Heart left ventricle (tissue), 16 donors: ENCODE measurements at regions of chr13 and their contacts with region 1.

Region 1: DNA sequence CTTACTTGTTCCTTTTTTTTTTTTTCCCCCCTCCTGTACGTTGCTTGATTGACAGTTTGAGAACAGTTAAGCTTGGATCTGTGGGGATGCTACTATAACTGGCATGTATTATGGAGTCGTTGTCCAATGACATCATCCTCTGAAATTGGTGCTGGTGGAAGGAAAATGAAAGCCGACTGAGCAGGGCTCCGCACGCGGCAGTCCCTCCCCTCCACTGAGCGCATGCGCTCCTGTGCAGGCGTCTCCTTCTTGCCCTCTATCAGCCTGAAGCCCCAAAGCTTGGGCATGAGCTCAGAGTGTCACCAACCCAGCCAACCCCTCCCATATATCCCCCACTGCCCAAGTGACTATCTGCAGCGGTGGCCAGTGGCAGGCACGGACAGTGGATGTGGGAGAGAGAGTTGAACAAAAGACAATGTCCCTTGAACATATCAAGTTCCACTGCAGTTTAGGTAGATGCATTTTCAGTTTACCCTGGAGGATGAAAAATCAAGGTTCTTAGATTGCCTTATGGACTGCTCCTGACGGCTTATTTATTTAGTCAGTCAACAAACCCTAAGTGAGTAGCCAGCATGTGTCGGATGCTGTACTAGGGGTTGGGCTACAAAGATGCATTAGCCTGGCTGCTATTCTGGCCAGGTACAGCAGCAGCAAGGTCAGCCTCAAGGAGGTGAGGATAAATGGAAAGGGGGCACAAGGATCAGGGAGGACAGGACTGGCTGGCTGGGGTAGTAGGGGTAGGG is 20.8 kb downstream of the MBNL2 start:
- DNase-seq: peak in 2 of 5 donors; percentile 39 to 42
- ATAC-seq: peak in 3 of 4 donors; percentile 19 to 57 (median 40)
- H3K4me3 ChIP-seq: no peak overlapping the region
- H3K27ac ChIP-seq: peak overlapping the region; percentile 37 to 84 (median 74)
- H3K4me1 ChIP-seq: peaks cover 12 to 100% (median 90%) of the 10 kb centered on the region in 12 donors
- H3K27me3 ChIP-seq: no peaks in the 10 kb centered on the region
- CTCF ChIP-seq: no peak
- POLR2A ChIP-seq: no peak

Region 2: DNA sequence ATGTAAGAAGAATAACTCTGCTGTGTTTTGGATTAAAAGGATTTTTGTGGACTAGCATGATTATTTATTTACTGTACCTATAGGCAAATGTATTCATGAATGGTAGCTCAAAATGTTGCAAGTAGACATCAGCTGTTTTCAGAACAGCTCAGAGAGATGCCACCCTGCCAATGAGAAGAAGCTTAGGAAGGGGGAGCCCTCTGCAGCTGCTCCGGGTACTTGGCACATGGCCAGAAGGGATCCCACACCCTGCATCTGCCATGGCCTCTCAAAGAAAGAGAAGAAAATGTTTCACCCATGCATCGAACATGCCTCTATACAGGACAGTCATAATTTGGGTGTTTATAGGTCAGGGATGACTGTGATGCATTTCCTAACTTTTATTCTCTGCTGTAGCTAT is 51.3 kb before region 1 on chr13:
- intact Hi-C with region 1: no loop called
- DNase-seq: no peak
- ATAC-seq: no peak
- H3K4me3 ChIP-seq: no peak overlapping the region
- H3K27ac ChIP-seq: no peak overlapping the region
- H3K4me1 ChIP-seq: peaks cover 0 to 7% (median 0%) of the 10 kb centered on the region in 12 donors
- H3K27me3 ChIP-seq: no peaks in the 10 kb centered on the region
- CTCF ChIP-seq: no peak
- POLR2A ChIP-seq: no peak

Region 3: GRCh38 chr13:97307882-97308624 is 65.1 kb after region 1 on chr13:
- intact Hi-C with region 1: loop called in 1 of 10 experiments (anchors 5 kb)
- DNase-seq: peak in 3 of 5 donors; percentile 49 to 52 (median 51)
- ATAC-seq: peak; percentile 48 to 65 (median 58)
- H3K4me3 ChIP-seq: no peak overlapping the region
- H3K27ac ChIP-seq: peak overlapping the region in 8 of 12 donors; percentile 28 to 58 (median 38)
- H3K4me1 ChIP-seq: peaks cover 6 to 76% (median 40%) of the 10 kb centered on the region in 12 donors
- H3K27me3 ChIP-seq: no peaks in the 10 kb centered on the region
- CTCF ChIP-seq: no peak
- POLR2A ChIP-seq: no peak

Region 4: DNA sequence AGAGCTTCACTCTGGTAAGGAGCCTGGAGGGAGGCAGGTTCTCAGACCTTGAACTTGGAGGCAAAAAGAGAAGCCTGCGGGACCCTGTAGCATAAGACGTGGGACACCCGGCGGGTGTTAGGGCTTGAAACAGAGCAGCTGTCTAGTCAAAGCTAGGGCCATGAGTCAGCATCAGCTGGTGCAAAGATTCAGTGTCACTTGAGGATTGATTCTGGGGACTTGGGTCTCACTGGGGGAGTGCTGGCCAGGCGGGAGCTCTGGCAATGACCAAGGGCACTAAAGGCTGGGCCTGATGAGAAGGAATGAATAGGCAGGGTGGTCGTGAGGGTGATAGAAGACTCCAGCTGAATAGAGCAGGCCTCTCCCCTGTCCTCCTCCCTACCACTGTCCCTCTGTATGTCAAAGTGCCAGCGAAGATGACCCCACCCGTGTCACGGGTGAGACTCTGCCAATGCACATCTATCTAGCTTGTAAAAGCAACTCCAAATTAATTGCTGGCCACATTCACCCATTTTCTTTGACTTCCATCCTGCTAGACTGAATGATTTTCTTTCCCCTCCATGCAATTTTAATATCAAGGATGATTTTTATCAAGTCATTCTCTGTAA is 76.3 kb after region 1 on chr13:
- intact Hi-C with region 1: loop called in 1 of 10 experiments (anchors 5 kb)
- DNase-seq: peak in 3 of 5 donors; percentile 29 to 69 (median 57)
- ATAC-seq: peak in 3 of 4 donors; percentile 52 to 63 (median 59)
- H3K4me3 ChIP-seq: no peak overlapping the region
- H3K27ac ChIP-seq: peak overlapping the region in 10 of 12 donors; percentile 17 to 63 (median 48)
- H3K4me1 ChIP-seq: peaks cover 0 to 95% (median 63%) of the 10 kb centered on the region in 12 donors
- H3K27me3 ChIP-seq: no peaks in the 10 kb centered on the region
- CTCF ChIP-seq: no peak
- POLR2A ChIP-seq: no peak